Calu3 (cell line): ENCODE measurements at regions of chr11 and their contacts with region 1.

Region 1: DNA sequence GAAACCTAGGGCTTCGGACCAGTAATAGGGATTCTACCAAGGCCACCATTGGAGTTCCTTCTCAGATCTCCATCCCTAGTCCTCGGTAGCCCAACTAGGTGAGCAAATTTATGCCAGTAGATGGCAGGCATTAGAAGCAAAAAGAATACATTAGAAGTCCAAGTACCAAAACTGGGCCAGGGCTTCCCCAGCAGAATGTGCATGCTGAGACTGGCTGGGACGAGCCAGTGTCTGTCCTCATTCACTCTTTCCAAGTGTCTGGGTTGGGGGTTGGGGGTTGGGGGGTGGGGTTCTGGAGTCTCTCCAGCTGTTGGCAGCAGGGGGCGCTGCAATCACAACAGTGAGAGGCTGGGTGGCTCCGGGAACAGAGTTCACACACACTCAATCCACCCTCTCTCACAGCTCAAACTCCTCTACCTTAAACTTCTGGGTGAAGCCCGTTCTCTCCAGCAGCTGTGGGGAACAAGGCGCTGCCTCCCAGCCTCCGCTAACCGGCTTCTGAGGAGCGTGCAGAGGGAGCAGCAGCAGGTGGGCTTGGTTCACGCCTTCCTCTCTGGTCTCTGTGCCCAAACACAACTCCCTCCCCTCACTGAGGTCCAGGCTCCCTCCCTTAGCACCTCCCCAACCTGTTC is 57.5 kb downstream of the BTG4 start:
- DNase-seq: peak; percentile 60
- H3K4me3 Mint-ChIP-seq: no peak overlapping the region
- H3K27ac Mint-ChIP-seq: no peak overlapping the region
- H3K4me1 Mint-ChIP-seq: no peaks in the 10 kb centered on the region
- H3K27me3 Mint-ChIP-seq: peaks cover 51% of the 10 kb centered on the region
- CTCF ChIP-seq: peak; percentile 66

Region 2: GRCh38 chr11:110801328-110801727 is 653.3 kb before region 1 on chr11:
- CTCF ChIA-PET with region 1: no interaction called
- intact Hi-C with region 1: no loop called
- DNase-seq: no peak
- H3K4me3 Mint-ChIP-seq: no peak overlapping the region
- H3K27ac Mint-ChIP-seq: no peak overlapping the region
- H3K4me1 Mint-ChIP-seq: no peaks in the 10 kb centered on the region
- H3K27me3 Mint-ChIP-seq: no peaks in the 10 kb centered on the region
- CTCF ChIP-seq: no peak

Region 3: GRCh38 chr11:111359223-111360149 is 95.2 kb before region 1 on chr11:
- CTCF ChIA-PET with region 1: no interaction called
- intact Hi-C with region 1: no loop called
- DNase-seq: no peak
- H3K4me3 Mint-ChIP-seq: no peak overlapping the region
- H3K27ac Mint-ChIP-seq: no peak overlapping the region
- H3K4me1 Mint-ChIP-seq: peaks cover 28% of the 10 kb centered on the region
- H3K27me3 Mint-ChIP-seq: no peaks in the 10 kb centered on the region
- CTCF ChIP-seq: no peak

Region 4: GRCh38 chr11:111565114-111565720 is 110.5 kb after region 1 on chr11:
- CTCF ChIA-PET with region 1: interaction called, 3 read pairs
- intact Hi-C with region 1: loop called (anchors 1 kb)
- DNase-seq: peak; percentile 67
- H3K4me3 Mint-ChIP-seq: no peak overlapping the region
- H3K27ac Mint-ChIP-seq: no peak overlapping the region
- H3K4me1 Mint-ChIP-seq: peaks cover 26% of the 10 kb centered on the region
- H3K27me3 Mint-ChIP-seq: no peaks in the 10 kb centered on the region
- CTCF ChIP-seq: peak; percentile 52

Region 5: DNA sequence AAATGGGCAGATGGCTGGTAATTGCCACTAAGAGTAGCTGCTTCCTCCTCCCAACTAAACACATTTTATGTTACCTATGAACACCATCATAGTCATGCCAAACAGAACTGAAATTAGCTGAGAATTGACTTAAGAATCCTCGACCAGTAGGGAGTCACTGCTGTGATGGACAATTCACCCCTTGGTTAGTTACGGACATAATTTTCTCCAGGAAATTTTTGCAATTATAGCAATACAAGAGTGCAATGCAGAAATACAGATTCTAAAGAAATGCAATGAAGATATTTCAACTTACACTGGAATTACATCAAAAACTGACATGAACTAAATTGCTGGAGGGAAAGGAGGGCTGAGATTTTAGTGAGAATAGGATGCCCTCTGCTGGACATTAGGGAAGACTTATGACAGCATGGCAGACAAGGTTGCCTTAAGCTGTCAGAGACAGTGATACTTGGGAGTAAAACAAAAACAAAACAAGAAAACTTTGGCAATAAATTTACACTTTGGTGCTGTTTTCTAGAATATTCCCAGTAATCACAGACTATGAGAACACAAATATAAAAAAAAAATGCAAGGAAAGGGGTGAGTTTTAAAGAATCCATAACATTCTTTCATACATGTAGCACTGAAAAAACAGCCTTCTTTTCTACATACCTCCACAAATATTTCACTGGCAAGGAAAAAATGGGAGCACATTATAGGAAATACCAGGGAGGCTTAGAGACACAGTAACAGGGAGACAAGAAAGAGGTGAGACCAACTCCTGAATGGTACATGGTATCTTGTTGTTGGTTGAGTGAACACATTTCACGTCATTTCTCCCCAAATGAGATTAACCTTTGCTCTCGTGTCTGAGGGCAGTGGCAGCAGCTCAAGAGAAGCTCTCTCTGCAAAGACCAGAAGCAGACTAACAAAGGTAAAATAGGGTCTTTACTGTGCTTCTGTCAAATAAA is 322.7 kb after region 1 on chr11:
- CTCF ChIA-PET with region 1: no interaction called
- intact Hi-C with region 1: loop called (anchors 10 kb)
- DNase-seq: peak; percentile 23
- H3K4me3 Mint-ChIP-seq: no peak overlapping the region
- H3K27ac Mint-ChIP-seq: no peak overlapping the region
- H3K4me1 Mint-ChIP-seq: peaks cover 15% of the 10 kb centered on the region
- H3K27me3 Mint-ChIP-seq: no peaks in the 10 kb centered on the region
- CTCF ChIP-seq: peak; percentile 28